Left ventricle myocardium superior (tissue), 1 donor: ENCODE measurements at regions of chr12 and their contacts with region 1.

Region 1: DNA sequence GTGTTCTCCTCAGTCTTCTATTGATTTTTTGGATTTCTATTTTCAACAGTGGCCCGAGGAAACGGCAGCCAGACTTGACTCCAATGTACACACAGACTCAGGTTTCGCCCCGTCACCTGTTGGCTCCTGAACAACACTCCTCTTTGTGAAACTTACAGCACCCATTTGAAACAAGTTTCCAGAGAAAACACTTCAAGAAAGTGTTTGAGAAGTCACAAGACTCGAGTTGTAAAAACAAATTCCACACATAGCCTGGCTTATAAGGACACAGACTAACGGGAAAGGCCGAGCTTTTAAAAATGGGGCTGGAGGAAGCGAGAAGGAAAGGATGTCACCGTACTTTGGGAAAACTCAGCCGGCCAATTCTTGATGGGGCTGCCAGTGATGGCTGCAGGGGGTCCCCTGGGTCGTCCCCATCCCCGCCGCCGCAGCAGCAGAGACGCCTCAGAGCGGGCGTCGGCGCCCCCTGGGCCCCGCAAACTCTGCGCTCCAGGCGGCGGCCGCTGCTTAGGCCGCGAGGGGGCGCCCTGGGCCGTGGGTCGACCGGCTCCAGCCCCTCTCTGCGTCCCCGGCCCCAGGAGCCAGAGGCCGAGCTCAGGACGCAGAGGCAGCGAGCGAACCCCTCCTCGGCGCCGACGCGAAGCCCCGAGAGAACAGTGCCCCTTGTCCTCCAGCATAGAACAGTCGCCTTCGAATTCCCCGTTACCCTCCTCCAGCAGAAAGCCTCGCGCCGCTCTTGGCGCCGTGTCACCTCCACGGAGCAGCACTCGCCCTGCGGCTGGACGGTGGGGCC is 106.9 kb downstream of the PRICKLE1 start:
- DNase-seq: peak; percentile 91
- ATAC-seq: peak; percentile 85

Region 2: GRCh38 chr12:42299392-42300308 is 183.0 kb before region 1 on chr12:
- intact Hi-C with region 1: no loop called
- DNase-seq: no peak
- ATAC-seq: no peak

Region 3: DNA sequence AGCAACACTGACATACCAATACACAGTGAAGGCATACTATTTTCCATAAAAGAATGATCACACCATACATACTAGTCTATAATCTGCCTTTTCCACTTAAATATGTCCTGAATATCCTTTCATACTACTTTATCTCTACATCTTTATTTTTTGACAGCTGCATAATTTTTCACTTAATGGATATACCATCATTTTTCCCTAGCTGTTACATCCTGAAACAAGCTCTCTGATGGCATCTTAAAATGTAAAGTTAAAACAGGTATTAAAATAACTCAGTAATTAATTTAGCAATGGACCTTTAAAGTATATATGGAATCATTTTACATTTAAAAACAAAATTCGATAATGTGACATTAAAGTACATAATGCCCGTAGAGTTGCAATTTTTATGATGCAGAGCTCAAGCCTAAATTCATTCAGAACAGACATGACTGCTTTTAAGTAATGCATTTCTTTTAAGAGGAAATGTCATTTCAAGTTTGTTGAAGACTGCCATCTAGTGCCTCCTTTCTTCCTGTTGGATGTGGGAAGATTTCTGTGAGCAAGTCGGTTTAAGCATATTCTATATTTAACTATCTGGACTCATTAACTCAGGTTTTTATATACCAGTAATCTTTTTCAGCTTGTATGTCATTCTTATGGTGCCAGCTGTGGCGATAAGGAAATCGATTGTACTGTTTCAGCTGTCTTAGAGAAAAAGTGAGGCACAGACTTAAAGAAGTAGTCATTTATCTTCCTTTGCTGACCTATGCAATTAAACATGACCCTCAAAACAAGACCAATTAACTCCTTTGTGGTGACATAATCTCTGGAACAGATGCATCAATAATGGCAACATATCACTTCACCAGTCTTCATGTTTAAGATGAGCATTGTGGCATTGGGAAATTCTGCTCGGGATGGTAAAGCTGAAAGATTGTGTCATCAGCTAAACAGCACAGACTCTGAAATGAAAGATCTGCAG is 86.6 kb after region 1 on chr12:
- intact Hi-C with region 1: loop called (anchors 2 kb)
- DNase-seq: no peak
- ATAC-seq: peak; percentile 67